WTC11 (cell line): ENCODE measurements at regions of chr5 and their contacts with region 1.

Region 1: GRCh38 chr5:136364307-136364706 is 1.0 kb downstream of the TRPC7 start:
- DNase-seq: no peak
- ATAC-seq: no peak
- H3K4me3 Mint-ChIP-seq: no peak overlapping the region
- H3K27ac Mint-ChIP-seq: no peak overlapping the region
- H3K4me1 Mint-ChIP-seq: peaks cover 12% of the 10 kb centered on the region
- H3K27me3 Mint-ChIP-seq: peaks cover under 1% of the 10 kb centered on the region; the same call in 1 of the 2 replicates
- CTCF ChIP-seq: peak; percentile 55

Region 2: GRCh38 chr5:136249678-136250266 is 114.5 kb before region 1 on chr5:
- CTCF ChIA-PET with region 1: interaction called, 16 read pairs
- POLR2A ChIA-PET with region 1: no interaction called
- DNase-seq: peak; percentile 72
- ATAC-seq: peak; percentile 91
- H3K4me3 Mint-ChIP-seq: no peak overlapping the region
- H3K27ac Mint-ChIP-seq: no peak overlapping the region
- H3K4me1 Mint-ChIP-seq: peaks cover 5% of the 10 kb centered on the region
- H3K27me3 Mint-ChIP-seq: no peaks in the 10 kb centered on the region; the same call in none of the 2 replicates
- CTCF ChIP-seq: peak; percentile 73

Region 3: DNA sequence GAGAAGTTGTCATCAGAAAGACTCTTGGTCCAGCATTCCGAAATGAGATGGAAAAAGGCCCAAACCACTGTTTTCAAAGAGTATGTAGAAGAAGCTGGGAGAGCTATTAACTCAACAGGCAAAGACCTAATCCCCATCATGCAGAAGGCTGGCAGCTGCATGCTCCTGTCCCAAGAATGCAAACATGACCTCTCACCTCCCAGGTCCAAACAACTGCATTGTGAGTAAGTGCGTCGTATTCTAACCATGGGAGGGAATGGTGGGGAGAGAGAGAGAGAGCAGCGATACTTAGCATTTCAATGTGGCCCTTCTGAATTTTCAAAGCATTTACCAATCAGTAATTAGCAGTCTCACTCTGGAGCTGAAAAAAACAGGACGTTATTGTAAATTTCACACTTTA is 26.5 kb before region 1 on chr5:
- CTCF ChIA-PET with region 1: interaction called, 10 read pairs
- POLR2A ChIA-PET with region 1: no interaction called
- DNase-seq: no peak
- ATAC-seq: peak; percentile 88
- H3K4me3 Mint-ChIP-seq: no peak overlapping the region
- H3K27ac Mint-ChIP-seq: no peak overlapping the region
- H3K4me1 Mint-ChIP-seq: peaks cover 10% of the 10 kb centered on the region
- H3K27me3 Mint-ChIP-seq: peaks cover 39% of the 10 kb centered on the region
- CTCF ChIP-seq: no peak

Region 4: GRCh38 chr5:136420168-136420898 is 56.0 kb after region 1 on chr5:
- CTCF ChIA-PET with region 1: interaction called, 11 read pairs
- POLR2A ChIA-PET with region 1: no interaction called
- DNase-seq: no peak
- ATAC-seq: peak; percentile 12; the same call in 1 of the 2 replicates
- H3K4me3 Mint-ChIP-seq: no peak overlapping the region
- H3K27ac Mint-ChIP-seq: no peak overlapping the region
- H3K4me1 Mint-ChIP-seq: peaks cover 33% of the 10 kb centered on the region
- H3K27me3 Mint-ChIP-seq: peaks cover 34% of the 10 kb centered on the region
- CTCF ChIP-seq: no peak

Region 5: DNA sequence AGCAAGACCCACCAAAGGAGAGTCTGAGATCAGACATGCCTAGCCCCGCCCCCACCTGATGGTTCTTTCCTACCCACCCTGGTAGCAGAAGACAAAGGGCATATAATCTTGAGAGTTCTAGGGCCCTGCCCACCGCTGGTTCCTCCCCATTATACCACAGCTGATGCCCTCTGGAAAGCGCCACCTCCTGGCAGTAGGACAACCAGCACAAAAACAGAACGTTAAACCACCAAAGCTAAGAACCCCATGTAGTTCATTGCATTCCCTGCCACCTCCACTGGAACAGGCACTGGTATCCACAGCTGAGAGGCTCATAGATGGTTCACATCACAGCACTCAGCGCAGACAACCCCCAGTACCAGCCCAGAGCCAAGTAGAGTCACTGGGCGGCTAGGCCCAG is 82.3 kb after region 1 on chr5:
- CTCF ChIA-PET with region 1: interaction called, 11 read pairs
- POLR2A ChIA-PET with region 1: no interaction called
- DNase-seq: no peak
- ATAC-seq: peak; percentile 67
- H3K4me3 Mint-ChIP-seq: no peak overlapping the region
- H3K27ac Mint-ChIP-seq: peak overlapping the region; percentile 69; the same call in 1 of the 2 replicates
- H3K4me1 Mint-ChIP-seq: peaks cover 26% of the 10 kb centered on the region
- H3K27me3 Mint-ChIP-seq: peaks cover 9% of the 10 kb centered on the region; the same call in 1 of the 2 replicates
- CTCF ChIP-seq: no peak; the same call in 1 of the 2 replicates

Region 6: DNA sequence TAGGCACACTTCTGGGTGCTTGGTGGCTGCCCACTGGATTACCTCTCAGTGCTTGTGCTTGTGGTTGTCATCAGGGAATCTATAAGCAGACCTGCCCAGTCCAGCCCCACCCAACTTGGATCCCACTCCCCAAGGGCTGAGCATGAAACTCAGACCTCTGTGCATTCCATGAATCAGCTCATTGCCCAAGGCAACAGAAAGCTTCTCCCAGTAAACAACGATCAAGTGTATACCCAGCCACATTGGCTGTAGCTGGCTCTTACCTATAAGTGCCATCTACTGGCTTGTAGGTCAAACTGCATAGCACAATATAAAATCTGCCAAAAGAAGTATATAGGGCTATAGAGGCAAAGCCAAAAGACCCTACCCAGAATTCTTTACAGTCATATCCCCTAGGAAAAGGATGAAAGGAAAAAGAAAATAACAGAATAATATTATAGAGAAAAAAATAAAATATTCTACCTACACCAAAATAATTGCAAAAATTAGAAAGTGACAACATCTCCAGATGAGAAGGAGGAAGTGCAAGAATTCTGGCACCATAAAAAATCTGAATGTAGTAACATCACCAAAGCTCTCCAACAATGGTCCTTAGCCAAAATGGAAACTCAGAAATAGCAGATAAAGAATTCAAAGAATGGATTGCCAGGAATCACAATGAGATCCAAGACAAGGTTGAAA is 322.0 kb after region 1 on chr5:
- CTCF ChIA-PET with region 1: interaction called, 16 read pairs
- POLR2A ChIA-PET with region 1: no interaction called
- DNase-seq: peak; percentile 27
- ATAC-seq: peak; percentile 99
- H3K4me3 Mint-ChIP-seq: no peak overlapping the region
- H3K27ac Mint-ChIP-seq: peak overlapping the region; percentile 80
- H3K4me1 Mint-ChIP-seq: peaks cover 10% of the 10 kb centered on the region
- H3K27me3 Mint-ChIP-seq: no peaks in the 10 kb centered on the region; the same call in none of the 2 replicates
- CTCF ChIP-seq: no peak; the same call in 1 of the 2 replicates

Region 7: DNA sequence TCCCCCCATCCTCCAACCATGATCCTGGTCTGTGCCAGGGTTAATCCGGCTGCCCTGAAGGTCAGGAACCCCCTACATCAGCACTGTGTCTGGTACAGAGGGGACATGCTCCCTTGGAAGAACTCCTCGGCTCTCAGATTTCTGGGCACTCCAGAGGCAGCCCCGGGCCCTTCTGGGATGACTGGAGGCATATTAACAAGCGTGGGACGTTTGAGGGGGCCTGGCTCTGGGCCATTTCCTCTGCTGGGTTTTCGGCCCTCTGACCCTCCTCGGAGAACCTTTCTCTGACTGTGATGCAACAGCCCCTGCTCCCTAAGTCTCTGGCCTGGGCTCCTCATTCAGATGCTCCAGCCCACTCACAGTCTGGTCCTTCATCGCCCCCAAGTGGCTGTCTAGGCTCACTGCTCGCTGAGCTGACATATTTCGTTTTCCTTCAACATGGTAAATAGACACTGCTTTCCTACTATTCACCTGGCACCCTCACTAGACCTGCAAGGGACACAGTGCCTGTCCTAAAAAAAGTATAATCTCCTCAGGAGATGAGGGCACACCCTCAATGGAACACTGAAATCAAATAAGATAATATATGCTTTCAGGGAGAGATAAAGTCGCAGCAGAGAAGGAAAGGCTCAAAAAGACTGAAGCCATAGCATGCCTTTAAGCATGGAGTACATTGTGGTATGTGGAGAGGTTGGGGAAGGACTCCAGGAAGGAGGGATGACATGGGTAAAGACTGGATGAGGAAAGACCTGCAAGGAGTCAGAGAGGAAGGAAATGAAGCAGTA is 405.8 kb after region 1 on chr5:
- CTCF ChIA-PET with region 1: interaction called, 35 read pairs
- POLR2A ChIA-PET with region 1: interaction called, 3 read pairs
- DNase-seq: peak; percentile 85
- ATAC-seq: peak; percentile 96
- H3K4me3 Mint-ChIP-seq: no peak overlapping the region
- H3K27ac Mint-ChIP-seq: no peak overlapping the region
- H3K4me1 Mint-ChIP-seq: peaks cover 18% of the 10 kb centered on the region
- H3K27me3 Mint-ChIP-seq: peaks cover 6% of the 10 kb centered on the region; the same call in 1 of the 2 replicates
- CTCF ChIP-seq: peak; percentile 77